ENCODE measurements at regions of chr2 and their contacts with region 1.

Region 1: GRCh38 chr2:174117951-174118930 is 130.1 kb downstream of the OLA1 start:
- DNase-seq: peak; percentile 91
- ATAC-seq: peak; percentile 71
- H3K4me3 ChIP-seq: peak overlapping the region; percentile 37
- H3K27ac ChIP-seq: peak overlapping the region; percentile 96
- H3K4me1 ChIP-seq: peaks cover 66% of the 10 kb centered on the region
- H3K27me3 ChIP-seq: no peaks in the 10 kb centered on the region
- CTCF ChIP-seq: no peak

Region 2: GRCh38 chr2:174094542-174094941 is 23.7 kb before region 1 on chr2:
- CTCF ChIA-PET with region 1: interaction called, 14 read pairs
- POLR2A ChIA-PET with region 1: interaction called, 3 read pairs
- intact Hi-C with region 1: no loop called
- DNase-seq: no peak
- ATAC-seq: no peak
- H3K4me3 ChIP-seq: no peak overlapping the region
- H3K27ac ChIP-seq: no peak overlapping the region
- H3K4me1 ChIP-seq: no peaks in the 10 kb centered on the region
- H3K27me3 ChIP-seq: no peaks in the 10 kb centered on the region
- CTCF ChIP-seq: no peak

Region 3: DNA sequence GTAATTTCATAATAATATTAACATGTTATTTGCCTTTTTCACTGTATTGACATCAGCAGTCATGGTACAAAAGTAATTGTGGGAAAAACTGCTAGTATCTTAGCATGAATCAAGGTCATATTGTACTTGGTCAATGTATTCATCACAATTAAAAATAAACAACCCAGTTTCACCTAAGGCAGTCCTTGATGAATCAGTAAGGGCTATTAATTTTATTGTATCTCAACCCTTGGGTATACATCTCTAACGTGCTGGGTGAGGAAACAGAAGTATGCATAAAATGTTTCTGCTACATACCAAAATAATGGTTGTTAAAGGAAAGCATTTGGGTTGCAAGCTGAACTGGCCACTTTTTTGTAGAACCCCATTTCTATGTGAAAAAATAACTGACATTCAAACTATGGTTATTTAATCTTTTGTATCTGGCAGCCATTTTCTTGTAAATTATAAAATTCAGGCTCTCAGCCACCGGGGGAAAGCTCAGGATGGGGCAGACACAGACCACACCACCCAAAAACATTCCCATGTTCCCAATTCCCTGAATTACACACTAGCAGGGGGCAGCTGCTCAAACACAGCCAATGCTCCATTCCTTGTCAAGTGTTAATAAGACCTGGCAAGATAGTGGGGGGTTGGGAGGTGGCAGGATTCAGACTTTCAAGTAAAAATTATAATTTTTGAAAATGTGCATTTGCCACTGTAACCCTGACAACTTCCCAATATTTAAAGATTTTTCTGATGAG is 80.8 kb after region 1 on chr2:
- CTCF ChIA-PET with region 1: no interaction called
- POLR2A ChIA-PET with region 1: no interaction called
- intact Hi-C with region 1: no loop called
- DNase-seq: peak; percentile 18
- ATAC-seq: peak; percentile 83
- H3K4me3 ChIP-seq: no peak overlapping the region
- H3K27ac ChIP-seq: no peak overlapping the region
- H3K4me1 ChIP-seq: no peaks in the 10 kb centered on the region
- H3K27me3 ChIP-seq: no peaks in the 10 kb centered on the region
- CTCF ChIP-seq: no peak

Region 4: DNA sequence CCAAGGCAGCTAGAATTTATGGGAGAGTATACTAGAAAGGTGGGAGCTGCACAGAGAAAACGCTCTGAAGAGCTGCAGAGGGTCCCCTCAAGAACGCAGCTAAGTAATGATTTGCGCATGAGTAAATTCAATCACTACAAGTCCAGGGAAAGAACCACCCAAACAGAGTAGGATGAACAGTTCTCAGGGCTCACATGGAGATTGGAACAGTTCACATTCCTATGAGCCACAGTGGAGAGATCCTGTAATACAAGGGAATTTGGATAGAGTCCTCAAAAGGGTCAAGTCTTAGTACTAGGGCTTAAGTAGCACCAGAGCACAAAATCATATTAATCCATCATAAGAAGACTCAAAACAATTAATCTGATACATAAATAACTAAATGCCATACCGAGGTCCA is 117.4 kb after region 1 on chr2:
- CTCF ChIA-PET with region 1: no interaction called
- POLR2A ChIA-PET with region 1: no interaction called
- intact Hi-C with region 1: loop called (anchors 5 kb)
- DNase-seq: no peak
- ATAC-seq: no peak
- H3K4me3 ChIP-seq: no peak overlapping the region
- H3K27ac ChIP-seq: no peak overlapping the region
- H3K4me1 ChIP-seq: peaks cover 35% of the 10 kb centered on the region
- H3K27me3 ChIP-seq: no peaks in the 10 kb centered on the region
- CTCF ChIP-seq: no peak

Region 5: GRCh38 chr2:174593574-174594203 is 475.4 kb after region 1 on chr2:
- CTCF ChIA-PET with region 1: no interaction called
- POLR2A ChIA-PET with region 1: no interaction called
- intact Hi-C with region 1: no loop called
- DNase-seq: peak; percentile 40
- ATAC-seq: peak; percentile 59
- H3K4me3 ChIP-seq: no peak overlapping the region
- H3K27ac ChIP-seq: peak overlapping the region; percentile 31
- H3K4me1 ChIP-seq: peaks cover 36% of the 10 kb centered on the region
- H3K27me3 ChIP-seq: no peaks in the 10 kb centered on the region
- CTCF ChIP-seq: no peak

Region 6: GRCh38 chr2:174697255-174697654 is 579.0 kb after region 1 on chr2:
- CTCF ChIA-PET with region 1: no interaction called
- POLR2A ChIA-PET with region 1: no interaction called
- intact Hi-C with region 1: no loop called
- DNase-seq: peak; percentile 76
- ATAC-seq: peak; percentile 98
- H3K4me3 ChIP-seq: no peak overlapping the region
- H3K27ac ChIP-seq: no peak overlapping the region
- H3K4me1 ChIP-seq: no peaks in the 10 kb centered on the region
- H3K27me3 ChIP-seq: peaks cover 6% of the 10 kb centered on the region
- CTCF ChIP-seq: peak; percentile 88